ENCODE measurements at regions of chr3 and their contacts with region 1.

Region 1: GRCh38 chr3:48273594-48274211 is 32.8 kb downstream of the ZNF589 start:
- DNase-seq: peak in 1 of 2 donors; percentile 68
- H3K4me3 ChIP-seq: no peak overlapping the region
- H3K27ac ChIP-seq: no peak overlapping the region
- H3K4me1 ChIP-seq: no peaks in the 10 kb centered on the region
- H3K27me3 ChIP-seq: no peaks in the 10 kb centered on the region
- CTCF ChIP-seq: peak; percentile 68 to 79 (median 74)

Region 2: GRCh38 chr3:48240711-48241491 is 32.8 kb before region 1 on chr3 and contains the start of gene ZNF589:
- intact Hi-C with region 1: no loop called
- DNase-seq: peak; percentile 59 to 96
- H3K4me3 ChIP-seq: peak within 1 kb of the TSS; percentile 76 to 96
- H3K27ac ChIP-seq: peak within 1 kb of the TSS; percentile 56 to 79
- H3K4me1 ChIP-seq: peaks cover 0 to 8% of the 10 kb centered on the region in 2 donors
- H3K27me3 ChIP-seq: no peaks in the 10 kb centered on the region
- CTCF ChIP-seq: peak in 2 of 3 experiments; percentile 29 to 31
- total RNA-seq, gene ZNF589: 3.7 TPM

Region 3: DNA sequence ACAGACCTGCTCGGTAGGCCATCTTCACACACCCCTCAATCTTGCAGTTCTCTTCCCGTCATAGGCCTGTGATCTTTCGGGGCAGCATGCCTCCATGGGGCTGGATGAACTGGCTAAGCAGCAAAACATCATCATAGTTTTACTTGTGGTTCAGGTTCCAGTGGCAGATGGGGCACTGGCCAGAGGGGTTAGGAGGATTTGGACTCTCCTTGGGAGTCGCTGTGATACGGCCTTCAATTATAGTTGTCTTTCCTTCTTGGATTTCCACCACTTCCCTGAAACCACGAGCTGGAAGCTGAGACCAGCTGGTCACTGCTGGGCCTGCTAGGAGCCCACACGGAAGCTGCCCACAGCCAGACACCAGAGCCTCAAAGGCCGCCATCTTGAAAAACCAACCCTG is 17.1 kb before region 1 on chr3:
- intact Hi-C with region 1: no loop called
- DNase-seq: no peak
- H3K4me3 ChIP-seq: no peak overlapping the region
- H3K27ac ChIP-seq: no peak overlapping the region
- H3K4me1 ChIP-seq: no peaks in the 10 kb centered on the region
- H3K27me3 ChIP-seq: no peaks in the 10 kb centered on the region
- CTCF ChIP-seq: no peak

Region 4: GRCh38 chr3:48301020-48301796 is 27.5 kb after region 1 on chr3:
- intact Hi-C with region 1: loop called (anchors 2 kb)
- DNase-seq: peak; percentile 63 to 93
- H3K4me3 ChIP-seq: peak within 1 kb of the TSS; percentile 91 to 96
- H3K27ac ChIP-seq: peak within 1 kb of the TSS; percentile 97
- H3K4me1 ChIP-seq: peaks cover 0 to 8% of the 10 kb centered on the region in 2 donors
- H3K27me3 ChIP-seq: no peaks in the 10 kb centered on the region
- CTCF ChIP-seq: no peak

Region 5: GRCh38 chr3:48338635-48339034 is 64.9 kb after region 1 on chr3:
- intact Hi-C with region 1: no loop called
- DNase-seq: no peak
- H3K4me3 ChIP-seq: no peak overlapping the region
- H3K27ac ChIP-seq: no peak overlapping the region
- H3K4me1 ChIP-seq: no peaks in the 10 kb centered on the region
- H3K27me3 ChIP-seq: no peaks in the 10 kb centered on the region
- CTCF ChIP-seq: no peak

Region 6: GRCh38 chr3:48439820-48440589 is 166.3 kb after region 1 on chr3 and contains the starts of genes CCDC51 and TMA7:
- intact Hi-C with region 1: loop called (anchors 1 kb)
- DNase-seq: peak; percentile 94 to 99
- H3K4me3 ChIP-seq: peak within 1 kb of the TSS; percentile 81 to 89
- H3K27ac ChIP-seq: peak within 1 kb of the TSS; percentile 95
- H3K4me1 ChIP-seq: peaks cover 6 to 18% of the 10 kb centered on the region in 2 donors
- H3K27me3 ChIP-seq: no peaks in the 10 kb centered on the region
- CTCF ChIP-seq: no peak
- total RNA-seq, gene CCDC51: 19.3 TPM
- total RNA-seq, gene TMA7: 142 TPM

Region 7: GRCh38 chr3:48548729-48549705 is 275.3 kb after region 1 on chr3:
- intact Hi-C with region 1: loop called (anchors 10 kb)
- DNase-seq: peak; percentile 46 to 94
- H3K4me3 ChIP-seq: no peak overlapping the region
- H3K27ac ChIP-seq: no peak overlapping the region
- H3K4me1 ChIP-seq: no peaks in the 10 kb centered on the region
- H3K27me3 ChIP-seq: no peaks in the 10 kb centered on the region
- CTCF ChIP-seq: peak; percentile 91 to 96 (median 94)

Measured in ascending aorta (tissue), 2 donors.